PC-3 (cell line): ENCODE measurements at regions of chr3 and their contacts with region 1.

Region 1: DNA sequence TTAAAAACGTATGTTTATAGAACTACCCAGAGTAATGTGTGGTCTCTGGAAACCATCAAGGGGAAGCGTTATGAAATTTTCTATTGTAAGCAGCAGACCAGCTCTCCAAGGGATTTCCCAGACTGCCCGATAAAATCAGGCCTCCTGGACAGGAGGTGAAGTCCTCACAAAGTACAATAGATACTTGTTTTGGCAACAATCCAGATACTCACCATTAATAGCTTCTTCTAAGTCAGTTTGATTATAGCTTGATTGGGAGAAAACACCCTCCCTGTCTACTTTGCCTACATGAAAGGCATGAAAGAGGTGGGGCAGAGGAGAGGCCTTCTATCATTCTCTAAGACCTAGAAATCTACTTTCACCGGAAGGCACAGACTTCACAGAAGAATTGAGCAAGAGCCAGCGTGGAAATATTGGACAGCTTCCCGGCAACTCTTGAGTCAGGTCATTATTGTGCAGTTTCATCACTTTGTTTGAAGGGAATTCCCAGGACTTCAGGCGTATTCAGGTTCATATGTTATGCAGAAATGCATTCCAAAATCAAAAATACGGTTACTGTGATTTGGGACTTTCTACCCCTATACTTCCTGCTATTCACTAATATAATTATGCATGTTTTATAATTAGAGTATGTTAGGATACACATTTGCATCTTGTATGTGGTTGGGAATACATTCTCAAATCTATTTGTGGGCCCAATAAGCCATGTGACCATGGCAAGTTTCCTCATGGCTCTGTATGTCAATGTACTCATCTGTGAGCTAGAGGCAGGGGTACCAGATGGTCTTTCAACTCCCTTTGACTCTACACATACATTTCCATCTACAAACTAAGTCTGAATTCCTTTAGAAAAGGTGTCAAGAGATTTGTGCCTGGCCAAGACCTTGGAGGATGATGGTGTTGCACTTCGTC is 103.5 kb downstream of the CD47 start:
- DNase-seq: peak; percentile 98
- ATAC-seq: peak; percentile 52
- H3K4me3 ChIP-seq: no peak overlapping the region
- H3K27ac ChIP-seq: peak overlapping the region; percentile 94
- H3K4me1 ChIP-seq: peaks cover 58% of the 10 kb centered on the region
- H3K27me3 ChIP-seq: no peaks in the 10 kb centered on the region
- CTCF ChIP-seq: no peak

Region 2: DNA sequence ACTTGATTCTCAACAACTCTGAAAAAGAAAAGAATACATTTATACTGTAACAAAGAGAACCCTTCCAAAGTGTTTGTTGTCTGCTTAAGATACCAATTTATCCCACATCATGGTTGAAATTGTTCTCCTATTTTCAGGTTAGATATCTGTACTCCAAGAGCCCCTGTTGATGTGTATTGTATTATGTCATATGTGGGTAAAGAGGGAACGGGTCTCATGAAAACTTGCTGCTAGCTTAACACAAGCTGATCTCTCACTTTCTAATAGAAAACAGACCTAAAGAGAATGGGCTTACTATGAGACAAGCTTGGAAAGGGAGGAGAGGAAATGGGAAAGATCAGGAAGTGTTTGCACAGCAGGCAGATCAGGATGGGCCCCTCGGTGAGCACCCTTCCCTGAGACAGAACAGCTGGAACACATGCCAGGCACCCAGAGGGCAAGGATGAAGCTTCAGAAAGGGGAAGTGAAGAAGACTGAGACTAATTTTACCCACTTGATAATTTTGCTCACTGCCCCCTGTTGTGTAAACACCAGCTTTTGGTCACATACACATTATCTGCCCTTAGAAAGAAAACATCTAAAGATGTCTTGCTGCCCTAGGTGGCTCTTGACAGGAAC is 1358.0 kb before region 1 on chr3:
- CTCF ChIA-PET with region 1: no interaction called
- POLR2A ChIA-PET with region 1: no interaction called
- intact Hi-C with region 1: no loop called
- DNase-seq: no peak
- ATAC-seq: no peak
- H3K4me3 ChIP-seq: no peak overlapping the region
- H3K27ac ChIP-seq: no peak overlapping the region
- H3K4me1 ChIP-seq: no peaks in the 10 kb centered on the region; the same call in 1 of the 2 replicates
- H3K27me3 ChIP-seq: no peaks in the 10 kb centered on the region
- CTCF ChIP-seq: no peak

Region 3: GRCh38 chr3:107794664-107795443 is 192.4 kb before region 1 on chr3:
- CTCF ChIA-PET with region 1: no interaction called
- POLR2A ChIA-PET with region 1: no interaction called
- intact Hi-C with region 1: no loop called
- DNase-seq: peak; percentile 30
- ATAC-seq: peak; percentile 43
- H3K4me3 ChIP-seq: no peak overlapping the region
- H3K27ac ChIP-seq: no peak overlapping the region
- H3K4me1 ChIP-seq: peaks cover 11% of the 10 kb centered on the region
- H3K27me3 ChIP-seq: no peaks in the 10 kb centered on the region
- CTCF ChIP-seq: peak; percentile 55

Region 4: DNA sequence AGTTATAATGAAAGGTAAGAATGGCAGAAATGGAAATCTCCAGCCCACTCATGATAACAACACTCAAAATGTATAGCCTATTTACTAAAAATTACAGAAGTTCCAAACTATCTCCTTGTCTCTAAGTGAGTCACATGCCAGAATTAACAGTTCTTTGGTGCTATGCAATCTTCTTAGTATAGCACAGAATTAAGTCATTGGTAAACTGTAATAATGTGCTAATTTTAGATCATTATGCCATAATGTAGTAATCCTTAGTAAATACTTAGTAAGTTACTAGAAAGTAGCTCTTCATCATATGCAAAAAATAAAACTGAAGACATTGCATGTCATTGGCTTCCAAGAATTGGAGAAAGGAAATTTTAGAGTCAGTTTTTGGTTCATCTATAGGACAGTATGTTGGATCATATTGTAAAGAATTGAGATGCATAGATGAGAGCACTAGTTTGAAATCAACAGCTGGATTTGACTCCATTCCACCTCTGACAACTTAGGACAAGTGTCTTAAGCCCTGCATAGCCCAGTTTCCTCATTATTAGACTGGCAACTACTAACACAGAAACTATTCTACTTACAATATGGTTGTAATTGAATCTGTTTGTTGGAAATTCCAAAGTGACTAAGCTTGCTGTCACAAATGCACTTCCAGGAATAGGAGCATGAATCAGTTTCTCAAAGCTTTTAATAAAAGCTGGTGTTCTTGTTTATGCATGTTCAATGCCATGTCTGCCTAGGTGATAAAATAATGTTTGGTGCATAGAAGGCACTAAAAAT is 143.6 kb after region 1 on chr3:
- CTCF ChIA-PET with region 1: no interaction called
- POLR2A ChIA-PET with region 1: no interaction called
- intact Hi-C with region 1: loop called (anchors 5 kb)
- DNase-seq: peak; percentile 95
- ATAC-seq: peak; percentile 86
- H3K4me3 ChIP-seq: no peak overlapping the region
- H3K27ac ChIP-seq: peak overlapping the region; percentile 90
- H3K4me1 ChIP-seq: peaks cover 38% of the 10 kb centered on the region
- H3K27me3 ChIP-seq: no peaks in the 10 kb centered on the region
- CTCF ChIP-seq: no peak

Region 5: DNA sequence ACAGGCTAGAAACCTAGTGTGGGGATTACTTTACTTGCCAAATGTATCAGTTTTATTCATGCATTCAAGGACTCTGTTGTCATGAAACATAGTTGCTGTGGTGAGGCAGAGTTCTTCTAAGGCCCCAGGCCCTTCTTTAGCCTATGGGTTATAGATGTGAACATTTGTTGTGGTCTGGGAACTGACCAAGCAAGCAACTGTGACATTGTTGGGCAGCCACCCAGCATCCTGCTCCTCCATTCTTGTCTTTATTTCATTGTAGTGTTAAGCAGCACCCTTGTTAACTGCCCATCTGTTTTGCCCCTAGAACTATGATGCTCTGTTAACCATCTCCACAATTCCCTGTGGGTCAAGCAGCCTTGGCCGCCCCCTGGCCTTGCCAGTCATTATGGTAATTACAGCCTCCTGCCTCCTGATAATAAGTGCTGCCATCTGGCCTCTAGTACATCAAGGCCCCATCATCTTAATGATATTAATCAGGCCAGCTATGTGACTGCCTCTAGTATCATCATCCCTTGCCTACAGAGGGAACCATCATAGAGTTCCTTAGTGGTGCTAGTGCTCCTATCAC is 247.2 kb after region 1 on chr3:
- CTCF ChIA-PET with region 1: no interaction called
- POLR2A ChIA-PET with region 1: no interaction called
- intact Hi-C with region 1: no loop called
- DNase-seq: no peak
- ATAC-seq: no peak
- H3K4me3 ChIP-seq: no peak overlapping the region
- H3K27ac ChIP-seq: no peak overlapping the region
- H3K4me1 ChIP-seq: no peaks in the 10 kb centered on the region
- H3K27me3 ChIP-seq: no peaks in the 10 kb centered on the region
- CTCF ChIP-seq: no peak